ENCODE measurements at regions of chr14 and their contacts with region 1.

Region 1: GRCh38 chr14:94136575-94137331 is 7.3 kb upstream of the IFI27L2 start:
- DNase-seq: peak; percentile 84
- H3K4me3 ChIP-seq: no peak overlapping the region
- H3K27ac ChIP-seq: no peak overlapping the region
- H3K4me1 ChIP-seq: no peaks in the 10 kb centered on the region
- H3K27me3 ChIP-seq: no peaks in the 10 kb centered on the region
- CTCF ChIP-seq: peak; percentile 83 to 93 (median 90)
- POLR2A ChIP-seq: no peak

Region 2: GRCh38 chr14:94036313-94037050 is 100.3 kb before region 1 on chr14:
- intact Hi-C with region 1: loop called (anchors 2 kb)
- DNase-seq: peak; percentile 45
- H3K4me3 ChIP-seq: no peak overlapping the region
- H3K27ac ChIP-seq: no peak overlapping the region
- H3K4me1 ChIP-seq: no peaks in the 10 kb centered on the region
- H3K27me3 ChIP-seq: no peaks in the 10 kb centered on the region
- CTCF ChIP-seq: peak; percentile 43 to 79 (median 73)
- POLR2A ChIP-seq: no peak

Measured in prostate gland (tissue), 2 donors.